Sigmoid colon (tissue), 7 donors: ENCODE measurements at regions of chr14 and their contacts with region 1.

Region 1: GRCh38 chr14:81436296-81437138 is 36.4 kb upstream of the STON2 start:
- DNase-seq: peak; percentile 87
- H3K4me3 ChIP-seq: peak overlapping the region; percentile 19 to 62 (median 50)
- H3K27ac ChIP-seq: peak overlapping the region in 3 of 4 donors; percentile 15 to 58 (median 30)
- H3K4me1 ChIP-seq: peaks cover 0 to 24% (median 18%) of the 10 kb centered on the region in 4 donors
- H3K27me3 ChIP-seq: peaks cover 4 to 68% (median 27%) of the 10 kb centered on the region in 3 donors
- CTCF ChIP-seq: no peak
- EP300 ChIP-seq: no peak
- POLR2A ChIP-seq: no peak

Region 2: GRCh38 chr14:80941241-80942182 is 495.0 kb before region 1 on chr14 and contains the start of gene CEP128:
- intact Hi-C with region 1: loop called (anchors 10 kb)
- DNase-seq: peak; percentile 96
- H3K4me3 ChIP-seq: peak within 1 kb of the TSS; percentile 59 to 78 (median 67)
- H3K27ac ChIP-seq: peak within 1 kb of the TSS; percentile 59 to 73 (median 64)
- H3K4me1 ChIP-seq: peaks cover 0 to 15% (median 9%) of the 10 kb centered on the region in 4 donors
- H3K27me3 ChIP-seq: no peaks in the 10 kb centered on the region
- CTCF ChIP-seq: no peak
- EP300 ChIP-seq: no peak
- POLR2A ChIP-seq: no peak
- total RNA-seq, gene CEP128: 8.3 to 16.6 (median 10.5) TPM

Region 3: GRCh38 chr14:81276073-81277069 is 160.1 kb before region 1 on chr14:
- intact Hi-C with region 1: loop called (anchors 5 kb)
- DNase-seq: no peak
- H3K4me3 ChIP-seq: no peak overlapping the region
- H3K27ac ChIP-seq: no peak overlapping the region
- H3K4me1 ChIP-seq: no peaks in the 10 kb centered on the region
- H3K27me3 ChIP-seq: no peaks in the 10 kb centered on the region
- CTCF ChIP-seq: no peak
- EP300 ChIP-seq: no peak
- POLR2A ChIP-seq: no peak

Region 4: DNA sequence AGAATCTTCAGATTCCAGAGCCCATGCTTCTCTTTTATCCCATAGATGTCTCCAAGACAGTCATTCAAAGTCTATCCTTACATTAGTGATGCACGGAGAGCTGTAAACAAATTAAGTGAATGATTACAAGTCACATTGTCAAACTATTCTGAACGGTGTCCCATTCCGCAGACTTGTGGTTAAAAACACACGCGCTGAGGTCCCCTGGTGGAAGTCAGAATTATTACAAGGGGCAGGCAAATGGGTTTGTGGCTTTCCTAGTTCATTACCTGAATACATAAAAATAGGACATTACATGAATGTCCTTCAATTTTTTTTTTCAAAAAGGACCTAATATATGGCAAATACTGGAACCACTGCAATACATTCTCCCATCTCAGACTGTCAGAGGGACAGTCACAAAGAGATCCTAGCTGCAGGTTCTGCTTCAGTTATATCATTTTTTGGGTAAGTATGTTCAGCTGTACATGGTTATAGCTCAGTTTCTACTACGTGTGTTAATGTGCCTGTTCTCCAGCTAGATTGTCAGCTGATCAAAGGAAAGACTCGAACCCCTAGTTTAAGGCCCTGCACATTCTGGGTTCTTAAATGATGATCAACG is 16.7 kb after region 1 on chr14:
- intact Hi-C with region 1: loop called (anchors 1 kb)
- DNase-seq: peak; percentile 71
- H3K4me3 ChIP-seq: no peak overlapping the region
- H3K27ac ChIP-seq: no peak overlapping the region
- H3K4me1 ChIP-seq: peaks cover 0 to 20% (median 0%) of the 10 kb centered on the region in 4 donors
- H3K27me3 ChIP-seq: peaks cover 0 to 27% (median 0%) of the 10 kb centered on the region in 3 donors
- CTCF ChIP-seq: peak; percentile 57 to 88 (median 84)
- EP300 ChIP-seq: no peak
- POLR2A ChIP-seq: no peak